ENCODE measurements at regions of chr1 and their contacts with region 1.

Region 1: DNA sequence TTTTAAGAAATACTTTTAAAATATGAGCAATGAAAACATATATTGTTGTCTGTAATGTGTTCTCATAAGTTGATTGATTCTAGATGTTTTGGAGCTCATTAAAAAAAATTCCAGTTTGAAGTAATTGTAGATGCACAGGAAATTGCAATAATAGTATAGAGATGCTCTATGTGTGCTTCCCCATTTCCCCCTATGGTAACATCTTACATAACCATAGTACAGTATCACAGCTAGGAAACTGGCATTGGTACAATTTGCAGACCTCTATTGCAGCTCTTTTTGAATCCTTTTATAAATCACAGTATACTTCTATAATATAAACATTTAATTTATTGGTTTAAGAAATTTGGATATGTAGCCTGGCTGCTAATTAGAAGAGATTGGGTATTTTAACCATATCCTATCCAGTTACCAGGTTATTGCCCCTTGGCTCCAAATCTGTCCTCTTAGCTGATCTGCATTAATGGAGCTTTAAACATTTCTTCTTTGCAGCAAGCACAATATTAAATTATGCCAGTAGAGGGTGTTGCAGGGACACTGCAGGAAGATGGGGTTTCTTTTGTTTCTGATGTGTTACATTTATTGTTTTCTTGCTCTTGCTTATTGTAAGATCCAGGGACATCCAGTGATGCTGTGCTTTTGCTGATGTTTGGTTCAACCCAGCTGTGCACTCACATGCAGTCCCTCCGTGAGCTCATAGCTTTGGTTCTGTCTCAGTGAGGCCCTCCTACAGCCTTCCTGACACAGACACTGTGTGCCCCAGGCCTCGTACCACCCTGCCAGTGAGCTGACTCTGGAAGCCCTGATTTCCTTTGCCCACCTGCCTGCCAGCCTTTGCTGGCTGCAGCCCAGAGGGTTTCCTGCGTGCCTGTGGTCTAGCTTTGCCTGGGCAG is 103.3 kb downstream of the RABGAP1L start:
- DNase-seq: no peak
- H3K4me3 Mint-ChIP-seq: no peak overlapping the region
- H3K27ac Mint-ChIP-seq: no peak overlapping the region
- H3K4me1 Mint-ChIP-seq: no peaks in the 10 kb centered on the region
- H3K27me3 Mint-ChIP-seq: no peaks in the 10 kb centered on the region

Region 2: DNA sequence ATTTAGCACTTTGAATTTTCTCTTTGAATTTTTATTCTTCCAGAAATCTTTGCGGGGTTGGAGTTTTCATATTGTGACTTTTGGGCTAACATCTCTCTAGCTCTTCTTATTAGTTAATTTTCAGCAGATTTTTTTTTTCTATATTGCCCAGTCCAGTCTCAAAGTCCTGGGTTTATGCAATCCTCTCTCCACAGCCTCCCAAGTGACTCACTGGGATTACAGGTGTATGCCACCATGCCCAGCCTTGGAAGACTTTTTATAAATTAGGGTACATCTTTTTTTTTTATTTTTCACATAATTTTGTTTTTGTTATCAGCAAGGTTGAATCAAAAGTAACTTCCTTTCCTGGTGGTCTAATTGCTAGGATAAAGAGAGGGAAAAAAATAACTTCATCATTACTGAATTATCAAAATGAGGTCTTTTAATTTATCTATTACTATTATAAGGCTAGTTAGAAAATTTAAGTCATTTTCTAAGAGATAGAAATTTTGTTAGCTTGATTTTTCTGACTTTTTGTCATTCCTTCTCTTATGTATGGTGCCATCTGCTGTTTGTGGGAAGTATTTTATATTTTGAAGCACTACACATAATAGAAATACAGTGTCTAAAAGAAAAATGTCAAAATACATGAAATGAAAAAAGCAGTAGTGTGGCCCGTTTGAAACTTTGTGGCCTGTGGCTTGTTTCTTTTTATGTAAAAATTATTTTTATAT is 463.7 kb after region 1 on chr1:
- CTCF ChIA-PET with region 1: interaction called, 18 read pairs
- DNase-seq: no peak
- H3K4me3 Mint-ChIP-seq: no peak overlapping the region
- H3K27ac Mint-ChIP-seq: no peak overlapping the region
- H3K4me1 Mint-ChIP-seq: no peaks in the 10 kb centered on the region
- H3K27me3 Mint-ChIP-seq: no peaks in the 10 kb centered on the region

Region 3: DNA sequence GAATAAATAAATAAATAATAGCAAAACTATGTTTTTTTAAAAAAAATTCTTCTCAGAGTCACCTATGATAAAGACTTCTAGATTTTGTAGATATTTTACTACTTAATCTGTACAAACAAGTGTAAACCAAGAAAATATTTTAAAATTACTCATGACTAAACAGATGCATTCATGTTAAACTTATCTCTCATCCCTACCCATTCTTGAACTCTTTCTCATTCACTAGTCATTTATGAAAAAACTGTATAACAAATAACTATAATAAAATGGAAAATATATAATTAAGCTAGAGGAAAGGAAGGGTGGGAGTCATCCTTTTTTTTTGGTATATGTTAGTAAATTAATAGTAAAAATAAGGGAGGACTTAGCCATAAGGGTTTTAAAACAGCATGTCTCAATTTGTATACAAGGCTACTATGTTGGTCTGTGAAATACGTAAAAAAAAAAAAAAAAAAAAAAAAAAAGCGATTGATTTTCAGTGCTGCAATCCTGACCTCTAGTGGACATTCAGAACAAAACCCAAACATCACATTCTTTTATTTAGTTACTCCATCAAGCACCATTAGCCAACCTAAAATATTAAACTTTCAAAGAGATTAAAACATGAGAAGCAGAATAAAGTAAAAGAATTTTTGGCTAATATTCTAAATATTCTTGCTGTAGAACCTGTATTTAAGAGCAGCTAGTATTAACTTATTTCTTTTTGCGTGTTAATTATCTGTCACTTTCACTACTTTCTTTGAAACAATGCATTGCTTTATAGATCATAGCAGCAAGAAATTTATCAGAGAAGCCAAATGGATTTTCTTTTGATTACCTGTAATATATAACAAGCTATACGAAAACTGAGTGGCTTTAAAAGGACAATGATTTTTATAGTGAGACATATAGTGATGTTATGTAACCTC is 481.3 kb after region 1 on chr1:
- CTCF ChIA-PET with region 1: interaction called, 49 read pairs
- DNase-seq: no peak
- H3K4me3 Mint-ChIP-seq: no peak overlapping the region
- H3K27ac Mint-ChIP-seq: no peak overlapping the region
- H3K4me1 Mint-ChIP-seq: no peaks in the 10 kb centered on the region
- H3K27me3 Mint-ChIP-seq: no peaks in the 10 kb centered on the region

Measured in activated naive CD4-positive, alpha-beta T cell treated with anti-CD3 and anti-CD28 coated beads, Interleukin-2, amount 10 ng/mL, durations not matched to agents 7 days and 5 days (primary cell).